Activated T-helper 1 cell treated with anti-CD3 and anti-CD28 coated beads, Interleukin-12 subunit alpha, Interleukin-12 subunit beta, Interleukin-2, Interleukin-4 antibody, amounts not matched to agents 30 ng/mL and 10 ng/mL and 1 ng/mL, durations not matched to agents 14 hours and 24 hours and 36 hours (primary cell): ENCODE measurements at regions of chr13 and their contacts with region 1.

Region 1: DNA sequence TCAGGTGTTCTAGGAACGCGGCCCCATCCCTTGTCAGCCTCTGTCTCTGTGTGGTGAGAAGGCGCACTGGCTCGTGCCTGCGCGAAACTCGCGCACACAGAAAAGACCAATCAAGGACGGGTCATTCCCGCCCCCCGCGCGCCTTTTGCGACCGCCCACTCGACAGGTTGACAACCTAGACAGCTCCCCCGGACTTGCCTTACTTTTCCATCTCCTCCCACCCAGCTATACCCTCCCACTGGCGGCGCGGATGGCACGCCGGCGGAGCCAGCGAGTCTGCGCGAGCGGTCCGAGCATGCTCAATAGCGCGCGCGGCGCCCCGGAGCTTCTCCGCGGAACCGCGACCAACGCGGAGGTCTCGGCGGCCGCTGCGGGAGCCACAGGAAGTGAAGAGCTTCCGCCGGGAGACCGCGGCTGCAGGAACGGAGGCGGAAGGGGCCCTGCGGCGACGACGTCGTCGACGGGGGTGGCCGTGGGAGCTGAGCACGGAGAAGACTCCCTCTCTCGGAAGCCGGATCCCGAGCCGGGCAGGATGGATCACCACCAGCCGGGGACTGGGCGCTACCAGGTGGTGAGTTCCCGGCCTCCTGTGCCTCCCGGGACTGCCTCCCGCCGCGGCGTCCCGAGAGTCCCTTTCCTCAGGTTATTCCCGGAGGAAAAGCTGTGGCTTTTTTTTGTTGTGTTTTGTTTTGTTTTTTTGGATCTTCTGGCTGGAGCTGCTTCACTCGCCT is at the start of gene NDFIP2:
- DNase-seq: peak; percentile 89
- H3K4me3 Mint-ChIP-seq: peak within 1 kb of the TSS; percentile 90
- H3K27ac Mint-ChIP-seq: peak within 1 kb of the TSS; percentile 95
- H3K4me1 Mint-ChIP-seq: peaks cover 76% of the 10 kb centered on the region
- H3K27me3 Mint-ChIP-seq: peaks cover 4% of the 10 kb centered on the region
- total RNA-seq, gene NDFIP2: 250 and 276 TPM in 2 replicates

Region 2: GRCh38 chr13:79194272-79194671 is 286.8 kb before region 1 on chr13:
- intact Hi-C with region 1: loop called (anchors 10 kb)
- DNase-seq: peak; percentile 62
- H3K4me3 Mint-ChIP-seq: peak overlapping the region; percentile 60
- H3K27ac Mint-ChIP-seq: peak overlapping the region; percentile 22
- H3K4me1 Mint-ChIP-seq: peaks cover 56% of the 10 kb centered on the region
- H3K27me3 Mint-ChIP-seq: no peaks in the 10 kb centered on the region

Region 3: GRCh38 chr13:79393564-79394249 is 87.4 kb before region 1 on chr13:
- intact Hi-C with region 1: loop called (anchors 1 kb)
- DNase-seq: no peak
- H3K4me3 Mint-ChIP-seq: peak overlapping the region; percentile 64
- H3K27ac Mint-ChIP-seq: peak overlapping the region; percentile 60
- H3K4me1 Mint-ChIP-seq: peaks cover 62% of the 10 kb centered on the region
- H3K27me3 Mint-ChIP-seq: no peaks in the 10 kb centered on the region

Region 4: GRCh38 chr13:79423801-79424642 is 57.1 kb before region 1 on chr13:
- intact Hi-C with region 1: loop called (anchors 1 kb)
- DNase-seq: no peak
- H3K4me3 Mint-ChIP-seq: no peak overlapping the region
- H3K27ac Mint-ChIP-seq: no peak overlapping the region
- H3K4me1 Mint-ChIP-seq: peaks cover 35% of the 10 kb centered on the region
- H3K27me3 Mint-ChIP-seq: no peaks in the 10 kb centered on the region

Region 5: GRCh38 chr13:79468819-79469218 is 12.3 kb before region 1 on chr13:
- intact Hi-C with region 1: loop called (anchors 1 kb)
- DNase-seq: no peak
- H3K4me3 Mint-ChIP-seq: no peak overlapping the region
- H3K27ac Mint-ChIP-seq: peak overlapping the region; percentile 0
- H3K4me1 Mint-ChIP-seq: peaks cover 26% of the 10 kb centered on the region
- H3K27me3 Mint-ChIP-seq: no peaks in the 10 kb centered on the region

Region 6: DNA sequence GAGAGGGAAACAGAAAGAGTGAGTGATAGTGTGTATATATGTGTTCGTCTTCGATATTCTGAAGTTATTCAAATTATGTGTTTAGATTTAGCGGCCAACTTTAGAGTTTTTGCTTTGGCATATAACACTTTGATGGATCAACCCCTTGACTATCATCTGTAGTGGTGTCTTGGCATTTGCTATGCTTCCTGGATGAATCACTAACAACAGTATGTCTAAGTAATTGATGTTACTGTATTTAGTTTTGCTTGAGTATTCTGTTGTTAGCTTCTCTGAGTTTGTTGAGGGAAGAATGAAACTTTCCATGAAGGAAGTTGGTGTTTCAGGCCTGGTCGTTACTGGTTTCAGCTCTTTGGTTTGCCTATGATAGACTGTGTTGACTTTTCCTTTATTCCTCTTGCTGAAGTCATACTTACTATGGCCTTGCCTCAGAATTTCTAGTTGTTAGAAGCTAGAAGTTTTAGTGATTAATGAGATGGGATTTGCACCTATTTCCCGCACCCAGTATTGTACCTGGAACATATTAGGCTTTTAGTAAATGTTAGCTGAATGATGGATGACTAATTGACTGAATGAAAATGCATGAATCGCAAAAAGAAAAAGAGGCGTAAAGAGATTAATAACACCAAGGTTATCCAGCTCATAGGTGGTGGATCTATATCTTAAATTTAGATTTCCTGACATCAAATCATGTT is 20.6 kb after region 1 on chr13:
- intact Hi-C with region 1: loop called (anchors 1 kb)
- DNase-seq: no peak
- H3K4me3 Mint-ChIP-seq: peak overlapping the region; percentile 38
- H3K27ac Mint-ChIP-seq: peak overlapping the region; percentile 93
- H3K4me1 Mint-ChIP-seq: peaks cover 92% of the 10 kb centered on the region
- H3K27me3 Mint-ChIP-seq: no peaks in the 10 kb centered on the region

Region 7: GRCh38 chr13:79541426-79542049 is 60.4 kb after region 1 on chr13:
- intact Hi-C with region 1: loop called (anchors 1 kb)
- DNase-seq: no peak
- H3K4me3 Mint-ChIP-seq: no peak overlapping the region
- H3K27ac Mint-ChIP-seq: no peak overlapping the region
- H3K4me1 Mint-ChIP-seq: peaks cover 34% of the 10 kb centered on the region
- H3K27me3 Mint-ChIP-seq: no peaks in the 10 kb centered on the region